H1 (cell line): ENCODE measurements at regions of chr12 and their contacts with region 1.

Region 1: DNA sequence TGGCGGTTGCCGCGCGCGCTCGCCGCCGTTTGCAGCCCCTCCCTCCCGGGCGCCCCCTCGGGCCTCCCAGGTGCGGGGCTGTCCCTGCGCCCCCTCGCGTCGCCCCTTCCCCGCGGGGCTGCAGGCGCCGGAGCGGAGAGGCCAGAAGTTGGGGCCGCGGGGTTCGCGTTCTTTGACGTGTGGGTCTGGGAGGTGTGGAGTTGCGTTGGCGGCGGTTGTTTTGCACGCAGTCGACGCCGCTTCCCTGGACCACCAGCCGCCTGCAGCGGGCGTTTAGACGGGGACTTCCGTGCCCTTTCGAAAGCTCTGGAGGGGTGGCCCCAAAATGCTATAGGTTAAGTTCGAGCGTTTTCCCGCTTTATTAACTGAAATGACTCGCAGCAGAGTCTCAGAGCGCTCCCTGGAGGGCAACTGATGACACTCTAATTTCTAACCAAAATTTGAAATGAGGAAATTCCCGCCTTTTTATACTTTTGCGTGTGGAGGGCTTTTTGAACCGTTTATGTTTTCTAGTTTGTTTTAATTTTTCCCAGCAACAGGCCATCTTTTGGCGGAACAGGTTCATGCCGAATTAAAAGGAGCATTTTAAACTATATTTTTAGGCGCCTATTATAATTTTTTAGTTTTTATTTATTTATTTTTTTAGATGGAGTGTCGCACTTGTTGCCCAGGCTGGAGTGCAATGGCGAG is 939 bp downstream of the TMPO start:
- DNase-seq: peak in 1 of 2 experiments; percentile 79
- H3K4me3 ChIP-seq: peak overlapping the region; percentile 95 to 98 (median 98)
- H3K27ac ChIP-seq: peak overlapping the region; percentile 99
- H3K4me1 ChIP-seq: no peaks in the 10 kb centered on the region; a peak in 2 of 7 replicates
- H3K27me3 ChIP-seq: no peaks in the 10 kb centered on the region
- CTCF ChIP-seq: peak; percentile 27 to 46 (median 42); a peak in 3 of 4 replicates
- EP300 ChIP-seq: no peak
- POLR2A ChIP-seq: peak in 1 of 2 experiments; percentile 70; a peak in 2 of 3 replicates
- RAD21 ChIP-seq: peak; percentile 58 to 63

Region 2: DNA sequence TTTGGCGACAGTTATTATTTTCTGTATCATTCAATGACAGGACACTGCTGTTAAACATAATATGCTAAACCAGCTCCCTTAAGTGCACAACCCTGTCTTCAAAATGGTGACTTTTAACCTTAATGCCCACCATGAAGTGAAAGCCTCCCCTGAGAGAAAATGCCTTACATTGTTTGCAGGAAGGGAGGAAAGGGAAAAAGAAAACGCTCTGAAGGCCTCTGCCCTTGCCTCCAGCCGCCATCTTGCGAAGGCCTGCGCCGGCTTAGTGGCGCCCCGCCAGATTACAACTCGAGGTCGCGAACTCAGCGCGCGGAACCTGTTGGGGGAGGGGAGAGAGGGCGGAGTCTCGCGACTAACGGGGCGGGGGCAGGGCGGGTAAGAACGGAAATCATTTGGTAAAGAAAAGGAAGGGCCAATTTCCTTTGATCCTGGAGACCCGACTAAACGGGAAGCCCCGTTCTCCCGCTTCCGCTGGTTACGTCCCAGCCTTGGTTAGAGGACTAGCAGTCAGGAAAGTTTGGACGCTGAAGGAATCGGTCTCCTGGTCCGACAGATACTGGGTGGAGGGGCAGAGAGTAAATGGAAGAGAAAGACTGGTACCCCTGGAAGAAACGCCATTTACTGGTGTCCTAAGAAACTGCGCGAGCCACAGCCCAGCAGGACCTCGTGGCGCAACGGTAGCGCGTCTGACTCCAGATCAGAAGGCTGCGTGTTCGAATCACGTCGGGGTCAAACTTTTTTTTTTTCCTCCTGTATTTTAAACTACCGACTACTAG is 12.5 kb before region 1 on chr12:
- CTCF ChIA-PET with region 1: interaction called, 9 read pairs
- POLR2A ChIA-PET with region 1: interaction called, 94 read pairs
- DNase-seq: peak; percentile 92 to 98
- H3K4me3 ChIP-seq: peak overlapping the region; percentile 69 to 96 (median 87)
- H3K27ac ChIP-seq: peak overlapping the region; percentile 89
- H3K4me1 ChIP-seq: no peaks in the 10 kb centered on the region
- H3K27me3 ChIP-seq: no peaks in the 10 kb centered on the region
- CTCF ChIP-seq: no peak; a peak in 1 of 4 replicates
- EP300 ChIP-seq: peak in 1 of 2 experiments; percentile 70; a peak in 1 of 3 replicates
- POLR2A ChIP-seq: peak in 1 of 2 experiments; percentile 59; a peak in 2 of 3 replicates
- RAD21 ChIP-seq: peak; percentile 7 to 24; a peak in 2 of 4 replicates

Region 3: DNA sequence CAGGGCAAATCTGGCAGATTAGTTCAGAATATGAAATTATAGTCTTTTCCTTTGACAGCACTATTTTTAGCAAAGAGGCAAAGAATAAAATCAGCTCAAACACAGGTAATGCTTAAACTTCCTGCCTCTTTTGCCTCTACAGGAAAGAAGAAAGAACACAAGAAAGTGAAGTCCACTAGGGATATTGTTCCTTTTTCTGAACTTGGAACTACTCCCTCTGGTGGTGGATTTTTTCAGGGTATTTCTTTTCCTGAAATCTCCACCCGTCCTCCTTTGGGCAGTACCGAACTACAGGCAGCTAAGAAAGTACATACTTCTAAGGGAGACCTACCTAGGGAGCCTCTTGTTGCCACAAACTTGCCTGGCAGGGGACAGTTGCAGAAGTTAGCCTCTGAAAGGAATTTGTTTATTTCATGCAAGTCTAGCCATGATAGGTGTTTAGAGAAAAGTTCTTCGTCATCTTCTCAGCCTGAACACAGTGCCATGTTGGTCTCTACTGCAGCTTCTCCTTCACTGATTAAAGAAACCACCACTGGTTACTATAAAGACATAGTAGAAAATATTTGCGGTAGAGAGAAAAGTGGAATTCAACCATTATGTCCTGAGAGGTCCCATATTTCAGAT is 16.5 kb after region 1 on chr12:
- CTCF ChIA-PET with region 1: interaction called, 13 read pairs
- POLR2A ChIA-PET with region 1: interaction called, 20 read pairs
- DNase-seq: no peak
- H3K4me3 ChIP-seq: no peak overlapping the region
- H3K27ac ChIP-seq: no peak overlapping the region
- H3K4me1 ChIP-seq: no peaks in the 10 kb centered on the region
- H3K27me3 ChIP-seq: no peaks in the 10 kb centered on the region
- CTCF ChIP-seq: peak in 2 of 3 experiments; percentile 55 to 68; a peak in 3 of 4 replicates
- EP300 ChIP-seq: no peak
- POLR2A ChIP-seq: no peak
- RAD21 ChIP-seq: peak in 1 of 2 experiments; percentile 36; a peak in 2 of 4 replicates

Region 4: DNA sequence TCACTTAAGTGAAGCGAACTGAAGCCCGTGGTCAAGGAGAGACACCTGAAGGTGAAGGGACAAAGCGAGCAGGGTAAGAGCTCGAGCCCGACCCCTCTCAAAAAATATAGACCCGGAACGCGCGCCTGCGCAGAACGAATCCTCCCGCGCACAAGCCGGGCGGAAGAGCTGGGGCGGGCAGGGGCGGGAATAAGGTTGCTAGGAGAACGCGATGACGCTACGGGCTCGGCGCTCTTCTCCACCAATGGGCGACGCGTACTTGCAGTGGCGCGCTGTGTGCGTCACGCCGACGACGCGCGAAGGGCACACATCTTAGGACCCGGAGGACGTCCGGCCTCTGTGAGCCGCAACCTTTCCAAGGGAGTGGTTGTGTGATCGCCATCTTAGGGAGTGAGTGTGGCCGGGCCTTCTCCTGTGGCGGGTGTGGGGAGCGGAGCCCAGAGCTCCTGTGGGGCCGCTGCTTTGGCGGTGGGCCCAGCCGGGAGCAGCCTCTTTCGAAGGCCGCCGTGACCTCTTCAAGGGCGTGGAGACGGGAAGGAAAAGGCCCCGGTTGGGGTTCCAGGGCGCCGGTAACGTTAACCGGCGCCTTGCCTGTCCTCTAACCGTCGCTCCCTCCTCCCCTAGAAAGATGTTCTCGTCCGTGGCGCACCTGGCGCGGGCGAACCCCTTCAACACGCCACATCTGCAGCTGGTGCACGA is 77.2 kb after region 1 on chr12 and contains the start of gene SLC25A3:
- CTCF ChIA-PET with region 1: no interaction called
- POLR2A ChIA-PET with region 1: interaction called, 12 read pairs
- DNase-seq: peak; percentile 90 to 96
- H3K4me3 ChIP-seq: peak within 1 kb of the TSS; percentile 73 to 99 (median 91)
- H3K27ac ChIP-seq: peak within 1 kb of the TSS; percentile 91
- H3K4me1 ChIP-seq: peaks cover 0 to 9% (median 4%) of the 10 kb centered on the region in 4 experiments; a peak in 2 of 7 replicates
- H3K27me3 ChIP-seq: no peaks in the 10 kb centered on the region
- CTCF ChIP-seq: no peak
- EP300 ChIP-seq: peak in 1 of 2 experiments; percentile 11; a peak in 1 of 3 replicates
- POLR2A ChIP-seq: peak; percentile 99
- RAD21 ChIP-seq: 0 out of 4 replicates have a peak, but pooled peaks of 1 of the 2 experiments have one; percentile 8
- total RNA-seq, gene SLC25A3: 709 and 719 TPM in 2 replicates

Region 5: DNA sequence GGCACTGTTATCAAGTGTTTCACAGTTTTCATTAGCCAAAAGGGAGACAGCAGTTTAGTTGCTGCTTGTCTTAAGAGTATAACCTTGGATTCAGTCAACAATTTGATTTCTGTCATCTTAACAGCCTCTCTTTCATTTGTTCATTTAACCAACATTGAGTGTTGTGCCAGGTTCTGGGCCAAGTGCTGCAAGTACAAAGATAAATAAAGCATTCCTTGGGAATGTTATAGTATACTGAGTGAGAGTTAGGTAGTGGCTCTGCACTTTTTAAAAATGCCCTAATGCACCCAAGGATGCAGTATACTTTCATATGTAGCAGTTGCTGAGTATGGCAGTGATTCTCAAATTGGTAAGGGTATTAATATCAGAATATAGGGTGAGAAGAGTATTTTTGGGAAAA is 144.2 kb after region 1 on chr12:
- CTCF ChIA-PET with region 1: no interaction called
- POLR2A ChIA-PET with region 1: no interaction called
- DNase-seq: no peak
- H3K4me3 ChIP-seq: no peak overlapping the region
- H3K27ac ChIP-seq: no peak overlapping the region
- H3K4me1 ChIP-seq: no peaks in the 10 kb centered on the region
- H3K27me3 ChIP-seq: no peaks in the 10 kb centered on the region
- CTCF ChIP-seq: no peak
- EP300 ChIP-seq: no peak
- POLR2A ChIP-seq: no peak
- RAD21 ChIP-seq: no peak